Colonic mucosa (tissue), 4 donors: ENCODE measurements at regions of chr13 and their contacts with region 1.

Region 1: DNA sequence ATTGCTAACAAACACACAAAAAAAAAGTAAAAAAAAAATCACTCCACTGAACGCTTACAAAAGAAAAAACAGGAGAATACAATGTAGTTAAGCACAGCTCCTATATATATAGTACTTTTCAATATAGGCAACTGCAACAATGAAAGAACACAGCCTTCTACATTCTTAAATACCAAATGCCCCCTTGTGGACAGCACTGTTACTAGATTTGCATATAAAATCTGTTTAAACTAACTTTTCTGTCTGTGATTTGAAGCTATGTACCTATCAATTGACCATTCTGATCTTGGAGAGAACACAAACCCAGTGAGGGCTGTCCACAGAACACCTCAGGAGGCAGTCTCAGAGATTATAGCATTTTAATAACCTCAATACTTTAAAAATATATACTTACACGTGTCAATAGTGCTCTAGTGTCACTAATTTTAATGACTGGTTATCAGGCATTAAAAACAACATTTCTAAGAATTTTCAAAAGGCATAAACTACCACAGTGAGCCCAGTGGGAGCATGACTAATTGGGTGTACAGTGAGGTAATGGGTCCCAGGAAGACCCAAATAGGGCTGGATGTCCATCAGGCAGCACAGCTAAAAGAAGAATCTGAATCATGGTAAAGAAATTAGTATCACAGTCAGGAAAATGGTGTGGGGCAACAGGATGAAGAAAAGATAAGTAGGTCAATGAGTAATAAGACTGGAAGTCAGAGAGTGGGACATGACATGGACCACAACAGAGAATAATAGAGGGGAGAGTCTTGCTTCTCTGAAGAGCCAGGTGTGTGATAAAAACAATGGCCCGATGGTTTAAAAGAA is 22.2 kb downstream of the CCDC169 start:
- DNase-seq: peak; percentile 26
- H3K4me3 ChIP-seq: no peak overlapping the region
- H3K27ac ChIP-seq: no peak overlapping the region
- H3K4me1 ChIP-seq: no peaks in the 10 kb centered on the region
- H3K27me3 ChIP-seq: no peaks in the 10 kb centered on the region
- CTCF ChIP-seq: peak; percentile 23

Region 2: GRCh38 chr13:35984776-35985453 is 290.5 kb before region 1 on chr13:
- intact Hi-C with region 1: loop called (anchors 5 kb)
- DNase-seq: no peak
- H3K4me3 ChIP-seq: no peak overlapping the region
- H3K27ac ChIP-seq: no peak overlapping the region
- H3K4me1 ChIP-seq: no peaks in the 10 kb centered on the region
- H3K27me3 ChIP-seq: no peaks in the 10 kb centered on the region
- CTCF ChIP-seq: no peak

Region 3: DNA sequence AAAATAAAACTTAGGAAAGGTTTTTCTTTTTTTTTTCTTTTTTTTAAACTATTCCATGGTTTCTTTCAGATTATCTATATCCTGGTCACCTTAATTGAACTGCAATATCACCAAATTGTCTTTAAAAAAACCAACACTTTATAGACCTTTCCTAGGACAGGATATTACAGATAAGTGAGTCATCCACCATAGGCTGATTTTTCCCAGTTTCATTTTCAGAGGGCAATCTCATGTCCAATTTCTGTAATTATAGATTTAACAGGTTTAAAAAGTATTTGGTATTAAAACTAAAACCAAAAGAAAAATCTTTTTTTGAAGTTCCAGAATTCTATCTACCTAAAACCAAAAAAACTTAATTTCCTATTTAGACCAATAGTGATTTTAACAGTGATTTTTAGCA is 57.6 kb after region 1 on chr13:
- intact Hi-C with region 1: no loop called
- DNase-seq: no peak
- H3K4me3 ChIP-seq: no peak overlapping the region
- H3K27ac ChIP-seq: no peak overlapping the region
- H3K4me1 ChIP-seq: no peaks in the 10 kb centered on the region
- H3K27me3 ChIP-seq: no peaks in the 10 kb centered on the region
- CTCF ChIP-seq: no peak

Region 4: DNA sequence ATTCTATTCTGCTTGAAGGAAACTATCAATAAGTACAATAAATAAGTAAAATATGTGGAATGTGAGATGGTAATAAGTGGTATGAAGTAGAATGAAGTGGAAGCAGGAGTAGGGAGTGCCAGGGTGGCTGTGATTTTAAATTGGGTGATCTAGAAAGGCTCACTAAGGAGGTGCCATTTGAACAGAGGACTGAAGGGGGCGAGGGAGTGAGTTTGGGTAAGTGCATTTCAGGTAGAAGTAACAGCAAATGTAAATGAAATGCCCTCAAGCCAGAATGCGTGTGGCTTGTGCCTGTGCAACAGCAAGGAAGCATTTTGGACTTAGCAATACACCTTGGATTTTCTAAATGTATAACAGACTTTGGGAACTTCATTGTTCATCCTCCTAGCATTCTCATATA is 234.0 kb after region 1 on chr13:
- intact Hi-C with region 1: no loop called
- DNase-seq: no peak
- H3K4me3 ChIP-seq: no peak overlapping the region
- H3K27ac ChIP-seq: no peak overlapping the region
- H3K4me1 ChIP-seq: no peaks in the 10 kb centered on the region
- H3K27me3 ChIP-seq: no peaks in the 10 kb centered on the region
- CTCF ChIP-seq: no peak